ENCODE measurements at regions of chr11 and their contacts with region 1.

Region 1: DNA sequence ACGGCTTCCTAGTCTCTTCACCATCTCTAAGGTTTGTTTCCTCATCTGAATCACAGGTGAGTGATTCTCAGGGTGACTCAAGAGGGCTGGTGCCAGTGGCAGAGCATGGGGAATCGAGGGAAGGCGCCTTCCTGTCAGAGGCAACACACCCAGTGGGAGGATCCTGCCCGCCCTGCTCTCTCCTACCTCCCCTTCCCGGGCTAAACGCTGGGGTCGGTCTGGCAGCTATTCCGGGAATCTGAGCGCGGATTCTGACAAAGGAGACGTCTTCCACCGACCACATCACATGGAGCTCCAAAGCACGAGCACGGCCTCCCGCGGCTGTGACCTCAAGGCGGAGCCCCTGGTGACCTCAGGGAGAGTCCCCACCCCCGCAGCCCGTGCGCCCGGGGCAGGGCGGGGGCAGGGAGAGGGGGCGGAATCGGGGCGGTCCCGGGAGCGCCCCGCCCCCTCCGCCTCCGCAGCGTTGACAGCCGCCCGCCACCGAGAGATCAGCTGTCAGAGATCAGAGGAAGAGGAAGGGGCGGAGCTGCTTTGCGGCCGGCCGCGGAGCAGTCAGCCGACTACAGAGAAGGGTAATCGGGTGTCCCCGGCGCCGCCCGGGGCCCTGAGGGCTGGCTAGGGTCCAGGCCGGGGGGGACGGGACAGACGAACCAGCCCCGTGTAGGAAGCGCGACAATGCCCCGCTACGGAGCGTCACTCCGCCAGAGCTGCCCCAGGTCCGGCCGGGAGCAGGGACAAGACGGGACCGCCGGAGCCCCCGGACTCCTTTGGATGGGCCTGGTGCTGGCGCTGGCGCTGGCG is at the start of gene SMPD1:
- DNase-seq: peak; percentile 95 to 97 (median 96)
- ATAC-seq: peak; percentile 96 to 98 (median 98)
- H3K4me3 ChIP-seq: peak within 1 kb of the TSS; percentile 62 to 97 (median 82)
- H3K27ac ChIP-seq: peak within 1 kb of the TSS; percentile 60 to 96 (median 90)
- H3K4me1 ChIP-seq: peaks cover 0 to 36% (median 19%) of the 10 kb centered on the region in 12 donors
- H3K27me3 ChIP-seq: no peaks in the 10 kb centered on the region
- CTCF ChIP-seq: no peak
- POLR2A ChIP-seq: peak; percentile 30 to 92
- total RNA-seq, gene SMPD1: 53.8 to 92.3 (median 67.8) TPM

Region 2: DNA sequence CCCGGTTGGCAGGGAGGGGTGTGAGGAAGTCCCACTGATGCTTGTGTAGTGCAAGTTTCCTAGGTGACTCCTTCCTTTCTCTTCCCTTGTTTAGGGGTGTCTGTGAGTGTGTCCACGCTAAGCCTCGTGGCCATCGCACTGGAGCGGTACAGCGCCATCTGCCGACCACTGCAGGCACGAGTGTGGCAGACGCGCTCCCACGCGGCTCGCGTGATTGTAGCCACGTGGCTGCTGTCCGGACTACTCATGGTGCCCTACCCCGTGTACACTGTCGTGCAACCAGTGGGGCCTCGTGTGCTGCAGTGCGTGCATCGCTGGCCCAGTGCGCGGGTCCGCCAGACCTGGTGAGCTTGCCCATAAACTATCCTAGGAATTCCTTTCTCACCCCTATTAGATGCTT is 120.1 kb before region 1 on chr11:
- intact Hi-C with region 1: no loop called
- DNase-seq: no peak
- ATAC-seq: no peak
- H3K4me3 ChIP-seq: no peak overlapping the region
- H3K27ac ChIP-seq: no peak overlapping the region
- H3K4me1 ChIP-seq: peaks cover 0 to 21% (median 4%) of the 10 kb centered on the region in 12 donors
- H3K27me3 ChIP-seq: no peaks in the 10 kb centered on the region
- CTCF ChIP-seq: peak in 2 of 12 donors; percentile 11 to 15
- POLR2A ChIP-seq: no peak

Region 3: GRCh38 chr11:6427516-6427915 is 37.4 kb after region 1 on chr11:
- intact Hi-C with region 1: loop called in 1 of 10 experiments (anchors 5 kb)
- DNase-seq: no peak
- ATAC-seq: no peak
- H3K4me3 ChIP-seq: no peak overlapping the region
- H3K27ac ChIP-seq: no peak overlapping the region
- H3K4me1 ChIP-seq: no peaks in the 10 kb centered on the region
- H3K27me3 ChIP-seq: peaks cover 0 to 4% (median 0%) of the 10 kb centered on the region in 9 donors
- CTCF ChIP-seq: no peak
- POLR2A ChIP-seq: no peak

Region 4: GRCh38 chr11:6481012-6481923 is 91.1 kb after region 1 on chr11 and contains the starts of genes ARFIP2 and TIMM10B:
- intact Hi-C with region 1: loop called in 1 of 10 experiments (anchors 10 kb)
- DNase-seq: peak; percentile 99
- ATAC-seq: peak; percentile 98 to 99 (median 98)
- H3K4me3 ChIP-seq: peak within 1 kb of the TSS; percentile 54 to 93 (median 80)
- H3K27ac ChIP-seq: peak within 1 kb of the TSS; percentile 37 to 96 (median 90)
- H3K4me1 ChIP-seq: peaks cover 3 to 37% (median 25%) of the 10 kb centered on the region in 12 donors
- H3K27me3 ChIP-seq: no peaks in the 10 kb centered on the region
- CTCF ChIP-seq: no peak
- POLR2A ChIP-seq: peak; percentile 70 to 88
- total RNA-seq, gene ARFIP2: 10.7 to 24.9 (median 18.9) TPM
- total RNA-seq, gene TIMM10B: 13.2 to 26.9 (median 16.1) TPM

Region 5: GRCh38 chr11:6646918-6647679 is 257.0 kb after region 1 on chr11:
- intact Hi-C with region 1: no loop called
- DNase-seq: peak; percentile 18 to 79 (median 58)
- ATAC-seq: peak; percentile 10 to 45 (median 42)
- H3K4me3 ChIP-seq: peak overlapping the region in 6 of 12 donors; percentile 6 to 39 (median 20)
- H3K27ac ChIP-seq: peak overlapping the region; percentile 59 to 92 (median 84)
- H3K4me1 ChIP-seq: peaks cover 0 to 64% (median 37%) of the 10 kb centered on the region in 12 donors
- H3K27me3 ChIP-seq: peaks cover 0 to 3% (median 0%) of the 10 kb centered on the region in 9 donors
- CTCF ChIP-seq: no peak
- POLR2A ChIP-seq: no peak

Region 6: GRCh38 chr11:6674862-6675261 is 284.7 kb after region 1 on chr11:
- intact Hi-C with region 1: loop called in 2 of 10 experiments (anchors 10 kb)
- DNase-seq: no peak
- ATAC-seq: peak in 3 of 4 donors; percentile 31 to 72 (median 34)
- H3K4me3 ChIP-seq: no peak overlapping the region
- H3K27ac ChIP-seq: peak overlapping the region in 9 of 12 donors; percentile 47 to 73 (median 63)
- H3K4me1 ChIP-seq: peaks cover 0 to 25% (median 2%) of the 10 kb centered on the region in 12 donors
- H3K27me3 ChIP-seq: no peaks in the 10 kb centered on the region
- CTCF ChIP-seq: no peak
- POLR2A ChIP-seq: no peak